ENCODE measurements at regions of chr16 and their contacts with region 1.

Region 1: DNA sequence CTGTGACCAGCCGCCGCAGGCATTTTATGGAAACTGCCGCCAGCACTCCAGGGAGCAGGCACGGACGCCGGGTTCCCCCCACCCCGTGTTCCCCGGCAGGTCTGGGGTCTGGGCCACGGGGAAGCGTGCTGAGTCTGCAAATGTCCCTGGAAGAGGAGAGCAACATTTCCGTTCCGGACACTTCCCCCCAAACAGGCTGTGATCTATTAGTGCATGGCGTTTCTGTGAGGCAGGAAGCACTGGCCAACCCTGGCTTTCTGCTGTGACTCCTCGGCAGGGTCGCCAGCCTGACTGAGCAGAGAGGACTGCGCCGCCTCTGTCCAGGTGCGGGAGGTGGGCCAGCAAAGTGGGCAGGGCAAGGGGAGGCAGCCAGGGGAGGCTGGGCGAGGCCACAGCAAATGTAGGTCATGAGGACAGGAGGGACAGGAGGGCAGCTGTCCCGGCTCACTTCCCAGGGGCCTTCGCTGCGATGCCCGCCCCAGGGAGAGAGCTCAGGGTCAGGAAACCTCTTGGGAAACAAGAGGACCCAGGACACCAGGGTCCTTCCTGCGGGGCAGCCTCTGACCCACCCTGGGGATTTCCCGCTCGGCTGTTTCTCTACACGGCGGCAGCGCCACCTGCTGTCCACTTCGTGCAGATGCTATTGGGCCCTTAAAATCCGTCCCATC is 9.5 kb downstream of the FOXF1 start:
- DNase-seq: no peak
- H3K4me3 ChIP-seq: peak overlapping the region in 3 of 4 donors; percentile 16 to 54 (median 16)
- H3K27ac ChIP-seq: peak overlapping the region in 3 of 4 donors; percentile 53 to 95 (median 63)
- H3K4me1 ChIP-seq: peaks cover 14 to 41% (median 16%) of the 10 kb centered on the region in 3 donors
- H3K27me3 ChIP-seq: peaks cover 0 to 93% (median 5%) of the 10 kb centered on the region in 4 donors
- CTCF ChIP-seq: peak; percentile 77 to 92 (median 85)
- POLR2A ChIP-seq: no peak

Region 2: DNA sequence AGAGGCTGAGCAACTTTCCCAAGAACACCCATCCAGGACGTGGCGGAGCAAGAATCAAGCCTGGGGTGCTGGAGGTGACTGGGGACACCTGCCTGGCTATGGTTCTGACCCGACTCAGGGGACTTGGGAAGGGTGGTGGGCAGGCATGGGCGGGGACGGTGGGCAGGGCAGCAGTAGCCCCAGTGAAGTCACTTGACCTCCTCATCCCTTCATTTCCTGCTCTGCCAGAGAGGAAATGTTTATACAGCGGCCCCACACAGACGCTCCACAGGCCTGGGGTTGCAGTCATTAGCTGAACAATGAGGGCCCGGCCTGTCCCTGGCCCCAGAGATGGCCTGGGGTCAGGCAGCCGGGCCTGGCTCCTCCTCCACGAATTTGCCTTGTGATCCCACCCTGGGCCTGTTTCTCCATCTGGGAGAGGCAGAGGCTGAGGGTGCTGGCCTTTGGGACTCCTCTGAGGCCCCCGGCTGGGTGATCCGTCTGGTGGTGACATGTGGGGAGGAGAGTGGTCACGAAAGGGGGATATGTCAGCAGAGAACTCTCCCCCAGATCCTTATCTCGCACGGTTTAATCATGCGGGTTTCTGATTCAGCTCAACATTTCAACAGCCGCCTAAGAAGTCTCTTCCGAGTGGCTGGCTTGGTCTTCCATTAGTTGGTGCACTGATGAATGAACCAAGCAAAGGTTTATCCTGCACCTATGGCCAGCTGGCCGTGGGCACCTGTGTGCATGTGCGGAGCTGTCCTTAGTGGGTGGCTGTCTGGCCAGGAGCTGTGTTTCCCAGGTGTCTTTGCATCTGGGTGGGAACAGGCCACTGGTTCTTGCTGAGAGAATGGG is 444.9 kb before region 1 on chr16:
- intact Hi-C with region 1: loop called (anchors 5 kb)
- DNase-seq: no peak
- H3K4me3 ChIP-seq: no peak overlapping the region
- H3K27ac ChIP-seq: no peak overlapping the region
- H3K4me1 ChIP-seq: peaks cover 0 to 4% (median 0%) of the 10 kb centered on the region in 3 donors
- H3K27me3 ChIP-seq: peaks cover 0 to 28% (median 0%) of the 10 kb centered on the region in 4 donors
- CTCF ChIP-seq: no peak
- POLR2A ChIP-seq: no peak

Region 3: GRCh38 chr16:86118467-86119307 is 401.1 kb before region 1 on chr16:
- intact Hi-C with region 1: no loop called
- DNase-seq: no peak
- H3K4me3 ChIP-seq: no peak overlapping the region
- H3K27ac ChIP-seq: no peak overlapping the region
- H3K4me1 ChIP-seq: peaks cover 0 to 8% (median 0%) of the 10 kb centered on the region in 3 donors
- H3K27me3 ChIP-seq: peaks cover 0 to 55% (median 0%) of the 10 kb centered on the region in 4 donors
- CTCF ChIP-seq: no peak
- POLR2A ChIP-seq: no peak

Region 4: GRCh38 chr16:86195863-86196630 is 323.7 kb before region 1 on chr16:
- intact Hi-C with region 1: loop called (anchors 5 kb)
- DNase-seq: no peak
- H3K4me3 ChIP-seq: peak overlapping the region in 3 of 4 donors; percentile 17 to 53 (median 29)
- H3K27ac ChIP-seq: peak overlapping the region; percentile 52 to 92 (median 82)
- H3K4me1 ChIP-seq: peaks cover 0 to 4% (median 0%) of the 10 kb centered on the region in 3 donors
- H3K27me3 ChIP-seq: peaks cover 0 to 92% (median 0%) of the 10 kb centered on the region in 4 donors
- CTCF ChIP-seq: no peak
- POLR2A ChIP-seq: no peak

Region 5: GRCh38 chr16:86457501-86458148 is 62.2 kb before region 1 on chr16:
- intact Hi-C with region 1: no loop called
- DNase-seq: no peak
- H3K4me3 ChIP-seq: no peak overlapping the region
- H3K27ac ChIP-seq: peak overlapping the region; percentile 42 to 84 (median 66)
- H3K4me1 ChIP-seq: peaks cover 0 to 9% (median 2%) of the 10 kb centered on the region in 3 donors
- H3K27me3 ChIP-seq: peaks cover 0 to 12% (median 0%) of the 10 kb centered on the region in 4 donors
- CTCF ChIP-seq: no peak
- POLR2A ChIP-seq: no peak